ENCODE measurements at regions of chr2 and their contacts with region 1.

Region 1: GRCh38 chr2:188353282-188353681 is 61.6 kb downstream of the GULP1 start:
- DNase-seq: no peak
- CTCF ChIP-seq: no peak

Region 2: GRCh38 chr2:188159484-188159883 is 193.8 kb before region 1 on chr2:
- CTCF ChIA-PET with region 1: no interaction called
- POLR2A ChIA-PET with region 1: no interaction called
- DNase-seq: no peak
- CTCF ChIP-seq: no peak

Region 3: GRCh38 chr2:188332619-188333018 is 20.7 kb before region 1 on chr2:
- CTCF ChIA-PET with region 1: no interaction called
- POLR2A ChIA-PET with region 1: no interaction called
- DNase-seq: no peak
- CTCF ChIP-seq: no peak

Region 4: GRCh38 chr2:188369365-188369764 is 16.1 kb after region 1 on chr2:
- CTCF ChIA-PET with region 1: interaction called, 19 read pairs
- POLR2A ChIA-PET with region 1: no interaction called
- DNase-seq: peak; percentile 38
- CTCF ChIP-seq: peak; percentile 72

Measured in GM10248 (cell line).